Gastrocnemius medialis (tissue), 4 donors: ENCODE measurements at regions of chr18 and their contacts with region 1.

Region 1: GRCh38 chr18:45690975-45691815 is 32.8 kb upstream of the SLC14A1 start:
- DNase-seq: peak in 1 of 2 donors; percentile 44
- ATAC-seq: peak; percentile 42 to 78
- H3K4me3 ChIP-seq: no peak overlapping the region
- H3K27ac ChIP-seq: no peak overlapping the region
- H3K4me1 ChIP-seq: no peaks in the 10 kb centered on the region
- H3K27me3 ChIP-seq: no peaks in the 10 kb centered on the region
- CTCF ChIP-seq: peak; percentile 54 to 78 (median 68)
- POLR2A ChIP-seq: no peak

Region 2: GRCh38 chr18:45702866-45703265 is 11.7 kb after region 1 on chr18:
- in situ Hi-C with region 1: no loop called
- intact Hi-C with region 1: no loop called
- DNase-seq: no peak
- ATAC-seq: no peak
- H3K4me3 ChIP-seq: no peak overlapping the region
- H3K27ac ChIP-seq: no peak overlapping the region
- H3K4me1 ChIP-seq: no peaks in the 10 kb centered on the region
- H3K27me3 ChIP-seq: no peaks in the 10 kb centered on the region
- CTCF ChIP-seq: no peak
- POLR2A ChIP-seq: no peak

Region 3: DNA sequence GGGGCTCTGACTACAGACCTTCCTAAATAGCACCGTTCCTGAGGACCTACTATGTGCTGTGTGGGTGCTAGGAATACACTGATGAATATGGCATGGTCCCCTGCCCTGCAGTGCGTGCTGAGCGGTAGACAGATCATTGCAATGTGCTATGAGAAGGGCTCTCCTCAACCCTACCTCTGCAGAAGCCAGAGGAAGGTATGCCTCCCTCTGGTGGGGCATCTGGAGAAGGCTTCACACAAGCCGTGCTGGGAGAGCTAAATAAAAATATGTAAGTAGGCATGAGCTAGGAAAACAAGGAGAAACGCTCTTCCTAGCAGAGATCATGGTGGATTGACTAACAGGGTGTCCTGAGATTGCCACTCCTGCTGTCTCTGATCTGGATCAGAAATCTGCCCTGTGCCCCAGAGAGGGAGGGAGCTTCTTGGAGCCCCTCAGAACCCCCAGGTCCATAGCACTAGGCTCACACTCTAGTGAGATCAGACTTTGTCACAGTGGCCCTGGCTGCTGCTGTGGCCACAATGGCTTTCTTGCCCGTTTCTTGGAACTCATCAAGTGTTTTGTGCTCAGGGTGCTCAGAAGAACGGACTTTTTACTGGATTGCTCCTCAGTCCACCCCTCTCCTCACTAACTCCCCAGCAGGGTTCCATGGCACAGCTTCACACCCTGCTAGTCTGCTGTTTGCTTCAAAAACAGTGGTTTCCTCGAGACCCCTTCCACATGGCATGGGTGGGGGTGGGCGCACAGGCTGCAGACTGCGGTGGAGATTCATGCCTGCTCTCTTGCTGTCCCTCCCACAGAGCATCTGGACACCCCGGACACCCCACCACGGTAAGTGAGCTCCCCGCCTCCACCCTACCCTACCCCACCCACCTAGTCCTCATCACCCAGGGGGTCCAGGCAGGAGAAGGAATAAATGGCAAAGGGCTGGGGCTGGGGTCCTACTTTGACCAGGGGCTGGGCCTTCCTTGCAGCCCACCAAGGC is 148.5 kb after region 1 on chr18:
- in situ Hi-C with region 1: no loop called
- intact Hi-C with region 1: loop called (anchors 1 kb)
- DNase-seq: no peak
- ATAC-seq: peak in 1 of 2 donors; percentile 49
- H3K4me3 ChIP-seq: no peak overlapping the region
- H3K27ac ChIP-seq: no peak overlapping the region
- H3K4me1 ChIP-seq: peaks cover 4 to 7% of the 10 kb centered on the region in 2 donors
- H3K27me3 ChIP-seq: peaks cover 39 to 42% (median 40%) of the 10 kb centered on the region in 3 donors
- CTCF ChIP-seq: peak in 2 of 5 experiments; percentile 12 to 27
- POLR2A ChIP-seq: no peak

Region 4: GRCh38 chr18:45879681-45880655 is 188.8 kb after region 1 on chr18:
- in situ Hi-C with region 1: loop called in 3 of 4 experiments (anchors 5 to 25 kb)
- intact Hi-C with region 1: loop called (anchors 2 kb)
- DNase-seq: peak; percentile 4 to 28
- ATAC-seq: peak; percentile 63 to 75
- H3K4me3 ChIP-seq: no peak overlapping the region
- H3K27ac ChIP-seq: no peak overlapping the region
- H3K4me1 ChIP-seq: no peaks in the 10 kb centered on the region
- H3K27me3 ChIP-seq: no peaks in the 10 kb centered on the region
- CTCF ChIP-seq: peak; percentile 85 to 98 (median 85)
- POLR2A ChIP-seq: no peak

Region 5: DNA sequence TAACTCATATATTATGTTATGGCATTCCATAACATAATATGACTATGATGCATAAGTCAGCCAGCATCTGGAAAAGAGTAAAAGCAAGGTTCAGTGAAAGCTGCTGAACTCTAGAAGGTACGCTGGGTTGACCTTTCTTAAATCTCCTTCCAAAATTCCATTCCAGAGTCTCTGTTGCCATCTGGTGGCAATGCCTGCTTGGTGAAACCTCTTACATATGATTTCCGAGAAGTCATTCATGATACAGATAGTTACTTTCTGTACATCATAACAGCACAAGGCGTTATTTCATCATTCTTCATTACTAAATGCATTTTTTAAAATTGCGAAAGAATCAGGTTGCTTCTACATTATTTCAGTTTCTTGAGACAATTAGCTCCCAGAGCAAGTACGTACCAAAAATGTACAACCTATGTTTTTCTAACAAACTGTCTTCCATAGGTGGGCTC is 282.9 kb after region 1 on chr18:
- in situ Hi-C with region 1: loop called in 1 of 4 experiments (anchors 10 kb)
- intact Hi-C with region 1: loop called (anchors 1 kb)
- DNase-seq: peak; percentile 26 to 54
- ATAC-seq: peak; percentile 83 to 94
- H3K4me3 ChIP-seq: peak overlapping the region in 1 of 4 donors; percentile 23
- H3K27ac ChIP-seq: no peak overlapping the region
- H3K4me1 ChIP-seq: peaks cover 0 to 3% of the 10 kb centered on the region in 2 donors
- H3K27me3 ChIP-seq: no peaks in the 10 kb centered on the region
- CTCF ChIP-seq: peak; percentile 47 to 78 (median 71)
- POLR2A ChIP-seq: no peak